ENCODE measurements at regions of chr14 and their contacts with region 1.

Region 1: DNA sequence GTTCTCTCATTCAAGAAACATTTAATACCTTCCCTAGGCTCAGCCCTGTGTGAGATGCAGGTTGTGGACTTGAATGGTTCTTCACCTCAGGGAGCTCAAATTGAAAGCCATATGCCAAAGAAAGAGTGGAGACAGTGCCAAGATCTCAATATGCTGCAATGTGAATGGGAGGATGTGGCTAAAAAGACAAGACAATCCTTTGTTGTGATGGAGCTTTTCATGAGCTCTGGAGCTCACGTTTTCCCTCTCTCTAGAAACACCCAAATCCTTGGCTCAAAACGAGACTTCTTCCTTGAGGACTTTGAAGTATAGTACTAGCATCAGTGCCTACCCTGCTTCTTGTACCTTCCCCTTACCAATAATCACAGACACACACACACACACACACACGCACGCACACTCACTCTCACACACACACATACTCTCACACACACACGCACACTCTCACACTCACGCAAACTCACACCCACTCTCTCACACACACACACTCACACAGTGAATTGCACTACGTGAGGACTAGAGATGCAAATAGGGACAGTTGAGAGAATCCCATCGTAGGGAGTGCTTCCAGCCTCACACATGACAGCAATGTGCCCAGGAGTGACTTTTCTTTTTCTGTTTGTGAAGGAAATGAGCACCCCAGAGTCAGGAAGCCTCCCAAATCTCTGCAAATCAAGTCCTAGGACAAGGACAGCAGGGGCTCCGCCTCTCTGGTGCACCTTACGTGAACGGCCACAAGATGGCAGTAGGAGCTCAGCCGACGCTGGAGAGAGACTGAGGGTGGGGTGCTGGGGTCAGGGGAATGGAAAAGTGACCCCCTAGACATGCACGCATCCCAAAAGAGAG is 231.4 kb downstream of the PCNX1 start:
- DNase-seq: peak; percentile 21
- ATAC-seq: peak; percentile 92
- H3K4me3 ChIP-seq: no peak overlapping the region
- H3K27ac ChIP-seq: no peak overlapping the region
- H3K4me1 ChIP-seq: peaks cover 3 to 10% of the 10 kb centered on the region in 2 experiments; a peak in 3 of 4 replicates
- H3K27me3 ChIP-seq: no peaks in the 10 kb centered on the region
- CTCF ChIP-seq: peak; percentile 75 to 96 (median 91)
- POLR2A ChIP-seq: no peak
- RAD21 ChIP-seq: peak; percentile 97

Region 2: DNA sequence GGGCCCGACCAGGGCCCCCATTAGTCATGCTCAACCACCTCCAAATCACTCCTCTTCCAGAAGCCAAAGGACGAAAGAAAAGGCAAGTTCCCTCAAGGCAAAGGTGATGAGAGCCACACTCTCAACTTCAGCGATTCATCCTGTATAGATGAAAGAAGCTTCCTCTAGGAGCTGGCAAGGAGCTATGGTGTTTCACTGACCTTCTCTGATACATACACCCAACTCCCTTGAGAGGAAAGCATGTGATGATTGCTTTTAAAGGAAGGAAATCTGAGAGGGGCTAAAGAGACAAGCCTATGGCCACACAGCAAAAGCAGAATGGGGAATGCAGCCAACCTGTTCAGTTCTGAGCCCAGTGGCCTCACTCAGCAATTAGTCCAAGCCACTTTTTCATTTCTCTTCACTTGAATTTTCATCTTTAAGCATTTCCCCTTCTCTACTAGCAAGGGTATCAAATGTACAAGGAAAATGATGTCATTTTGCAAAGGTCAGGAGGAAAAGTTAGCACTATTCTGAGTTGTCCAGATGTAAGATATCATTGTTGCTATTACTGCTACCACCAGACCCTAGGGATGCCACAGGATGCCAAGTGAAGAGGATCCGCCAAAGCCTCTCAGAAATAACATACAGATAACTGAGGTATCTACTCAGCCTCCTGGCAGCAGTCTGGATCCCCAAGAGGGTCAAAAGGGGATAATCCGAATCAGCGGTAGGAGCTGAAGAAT is 411.9 kb before region 1 on chr14:
- CTCF ChIA-PET with region 1: no interaction called
- POLR2A ChIA-PET with region 1: no interaction called
- RAD21 ChIA-PET with region 1: no interaction called
- intact Hi-C with region 1: no loop called
- DNase-seq: no peak
- ATAC-seq: no peak
- H3K4me3 ChIP-seq: no peak overlapping the region
- H3K27ac ChIP-seq: no peak overlapping the region
- H3K4me1 ChIP-seq: peaks cover 0 to 3% of the 10 kb centered on the region in 2 experiments; a peak in 1 of 4 replicates
- H3K27me3 ChIP-seq: no peaks in the 10 kb centered on the region
- CTCF ChIP-seq: no peak
- POLR2A ChIP-seq: no peak
- RAD21 ChIP-seq: no peak

Region 3: GRCh38 chr14:71117839-71118743 is 20.6 kb before region 1 on chr14:
- CTCF ChIA-PET with region 1: no interaction called
- POLR2A ChIA-PET with region 1: no interaction called
- RAD21 ChIA-PET with region 1: no interaction called
- intact Hi-C with region 1: no loop called
- DNase-seq: no peak
- ATAC-seq: peak; percentile 34; the same call in 1 of the 2 replicates
- H3K4me3 ChIP-seq: no peak overlapping the region
- H3K27ac ChIP-seq: no peak overlapping the region
- H3K4me1 ChIP-seq: peaks cover 0 to 12% of the 10 kb centered on the region in 2 experiments; a peak in 2 of 4 replicates
- H3K27me3 ChIP-seq: no peaks in the 10 kb centered on the region
- CTCF ChIP-seq: no peak
- POLR2A ChIP-seq: no peak
- RAD21 ChIP-seq: no peak

Region 4: DNA sequence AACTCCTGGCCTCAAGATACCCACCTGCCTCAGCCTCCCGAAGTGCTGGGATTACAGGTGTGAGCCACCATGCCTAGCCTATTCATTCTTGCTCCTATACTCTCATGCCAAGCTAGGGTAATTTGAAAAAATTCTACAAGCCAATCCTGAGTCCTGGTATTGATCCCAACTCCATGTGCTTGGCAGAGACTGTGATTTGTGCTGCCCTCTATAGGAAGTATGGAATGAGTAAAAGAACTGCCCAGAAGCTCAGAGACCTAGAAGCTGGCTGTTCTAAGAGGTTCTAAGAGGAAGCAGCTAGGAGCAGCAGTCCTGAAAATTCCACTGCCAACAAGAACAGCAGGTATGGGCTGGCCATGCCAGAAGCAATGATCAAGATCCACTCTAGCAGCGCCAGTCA is 171.1 kb after region 1 on chr14:
- CTCF ChIA-PET with region 1: no interaction called
- POLR2A ChIA-PET with region 1: no interaction called
- RAD21 ChIA-PET with region 1: no interaction called
- intact Hi-C with region 1: no loop called
- DNase-seq: no peak
- ATAC-seq: peak; percentile 86
- H3K4me3 ChIP-seq: no peak overlapping the region
- H3K27ac ChIP-seq: no peak overlapping the region
- H3K4me1 ChIP-seq: no peaks in the 10 kb centered on the region
- H3K27me3 ChIP-seq: no peaks in the 10 kb centered on the region
- CTCF ChIP-seq: peak; percentile 16 to 45 (median 42); a peak in 4 of 6 replicates
- POLR2A ChIP-seq: no peak
- RAD21 ChIP-seq: peak; percentile 47

Region 5: DNA sequence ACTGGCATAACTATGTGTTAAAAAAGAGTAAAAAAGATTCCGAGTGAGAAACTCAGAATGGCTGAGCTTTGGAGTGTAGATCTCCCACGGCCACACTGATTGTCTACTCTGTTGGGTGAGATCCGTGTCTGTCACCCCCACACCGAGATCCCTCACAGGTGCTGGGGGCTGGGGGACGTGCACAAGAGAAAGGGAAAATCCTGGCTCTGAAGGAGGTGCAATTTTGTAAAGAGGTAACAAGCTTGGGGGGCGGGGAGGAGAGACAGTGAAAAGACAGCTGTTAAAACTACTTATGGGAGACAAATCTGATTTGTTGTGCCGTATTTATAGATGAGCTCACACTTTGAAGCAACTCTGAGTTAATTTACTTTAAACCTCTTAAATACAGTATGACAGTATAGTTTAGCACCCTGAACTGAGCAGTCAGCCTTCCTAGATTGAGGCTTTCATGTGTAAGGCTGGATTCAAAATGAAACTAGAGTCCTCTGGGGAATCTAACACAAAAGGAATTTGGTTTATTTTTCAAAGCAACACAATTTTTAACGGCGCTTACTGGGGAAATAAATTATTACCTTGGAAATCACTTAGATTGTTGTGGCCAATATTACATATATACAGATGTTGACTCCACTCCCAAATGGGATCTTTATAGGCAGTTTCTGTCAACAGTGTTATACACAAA is 626.2 kb after region 1 on chr14:
- CTCF ChIA-PET with region 1: no interaction called
- POLR2A ChIA-PET with region 1: no interaction called
- RAD21 ChIA-PET with region 1: no interaction called
- intact Hi-C with region 1: no loop called
- DNase-seq: no peak
- ATAC-seq: no peak
- H3K4me3 ChIP-seq: no peak overlapping the region
- H3K27ac ChIP-seq: no peak overlapping the region
- H3K4me1 ChIP-seq: no peaks in the 10 kb centered on the region
- H3K27me3 ChIP-seq: no peaks in the 10 kb centered on the region
- CTCF ChIP-seq: no peak
- POLR2A ChIP-seq: no peak
- RAD21 ChIP-seq: no peak

Region 6: GRCh38 chr14:71855399-71856036 is 716.8 kb after region 1 on chr14:
- CTCF ChIA-PET with region 1: no interaction called
- POLR2A ChIA-PET with region 1: no interaction called
- RAD21 ChIA-PET with region 1: no interaction called
- intact Hi-C with region 1: loop called (anchors 1 kb)
- DNase-seq: peak; percentile 46
- ATAC-seq: peak; percentile 83
- H3K4me3 ChIP-seq: no peak overlapping the region
- H3K27ac ChIP-seq: no peak overlapping the region
- H3K4me1 ChIP-seq: no peaks in the 10 kb centered on the region
- H3K27me3 ChIP-seq: no peaks in the 10 kb centered on the region
- CTCF ChIP-seq: peak; percentile 55 to 91 (median 77); a peak in 5 of 6 replicates
- POLR2A ChIP-seq: no peak
- RAD21 ChIP-seq: peak; percentile 73